ENCODE measurements at regions of chr9 and their contacts with region 1.

Region 1: GRCh38 chr9:92764988-92765936 is 629 bp upstream of the BICD2 start:
- DNase-seq: peak in 1 of 2 donors; percentile 98
- H3K4me3 ChIP-seq: peak overlapping the region; percentile 90 to 92
- H3K27ac ChIP-seq: peak overlapping the region; percentile 98
- H3K4me1 ChIP-seq: peaks cover 45% of the 10 kb centered on the region
- H3K27me3 ChIP-seq: no peaks in the 10 kb centered on the region
- CTCF ChIP-seq: peak; percentile 77 to 93 (median 87)
- POLR2A ChIP-seq: peak in 1 of 2 donors; percentile 81

Region 2: DNA sequence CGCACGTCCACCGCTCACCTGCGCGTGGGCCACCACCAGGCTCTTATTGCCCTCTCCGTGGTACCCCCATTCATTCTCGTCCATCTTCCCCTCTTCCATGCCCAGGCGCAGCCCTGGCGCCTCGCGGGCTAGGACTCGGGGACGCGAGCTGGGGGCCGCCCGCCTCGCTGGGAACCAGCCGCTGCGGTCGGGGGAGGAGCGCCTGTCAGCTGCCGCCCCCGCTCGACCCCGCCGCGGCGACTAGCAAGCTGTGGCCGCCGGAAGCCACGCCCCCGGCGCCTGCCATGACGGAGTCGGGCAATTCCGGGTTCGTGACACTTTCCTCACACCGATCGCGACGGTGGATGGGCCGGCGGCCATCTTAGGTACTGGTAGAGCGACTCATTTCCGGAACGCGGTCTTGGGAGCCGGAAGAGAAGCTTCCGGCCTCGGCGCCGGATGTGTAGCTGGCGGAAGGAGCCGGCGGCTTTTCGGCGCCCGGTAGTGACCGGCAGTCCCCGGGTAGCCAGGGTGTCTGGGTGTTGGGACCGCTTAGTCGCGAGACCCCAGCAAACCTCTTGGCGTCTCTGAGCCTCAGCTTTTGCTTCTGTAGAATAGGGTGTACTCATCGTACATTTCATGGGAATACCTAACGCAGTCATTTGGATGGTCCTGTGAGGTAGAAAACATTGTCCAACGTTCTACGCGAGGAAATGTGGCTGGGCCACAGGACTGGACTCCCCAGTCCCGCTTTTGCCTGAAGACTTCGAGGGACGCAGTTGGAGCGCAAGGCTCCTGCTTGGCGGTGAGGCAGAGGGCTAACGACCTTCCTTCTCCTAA is 95.2 kb before region 1 on chr9 and contains the start of gene IPPK:
- intact Hi-C with region 1: loop called (anchors 5 kb)
- DNase-seq: peak in 1 of 2 donors; percentile 99
- H3K4me3 ChIP-seq: peak within 1 kb of the TSS; percentile 76 to 80
- H3K27ac ChIP-seq: peak within 1 kb of the TSS; percentile 82
- H3K4me1 ChIP-seq: peaks cover 49% of the 10 kb centered on the region
- H3K27me3 ChIP-seq: no peaks in the 10 kb centered on the region
- CTCF ChIP-seq: no peak
- POLR2A ChIP-seq: peak in 1 of 2 donors; percentile 39
- total RNA-seq, gene IPPK: 39.5 TPM